ENCODE measurements at regions of chr17 and their contacts with region 1.

Region 1: DNA sequence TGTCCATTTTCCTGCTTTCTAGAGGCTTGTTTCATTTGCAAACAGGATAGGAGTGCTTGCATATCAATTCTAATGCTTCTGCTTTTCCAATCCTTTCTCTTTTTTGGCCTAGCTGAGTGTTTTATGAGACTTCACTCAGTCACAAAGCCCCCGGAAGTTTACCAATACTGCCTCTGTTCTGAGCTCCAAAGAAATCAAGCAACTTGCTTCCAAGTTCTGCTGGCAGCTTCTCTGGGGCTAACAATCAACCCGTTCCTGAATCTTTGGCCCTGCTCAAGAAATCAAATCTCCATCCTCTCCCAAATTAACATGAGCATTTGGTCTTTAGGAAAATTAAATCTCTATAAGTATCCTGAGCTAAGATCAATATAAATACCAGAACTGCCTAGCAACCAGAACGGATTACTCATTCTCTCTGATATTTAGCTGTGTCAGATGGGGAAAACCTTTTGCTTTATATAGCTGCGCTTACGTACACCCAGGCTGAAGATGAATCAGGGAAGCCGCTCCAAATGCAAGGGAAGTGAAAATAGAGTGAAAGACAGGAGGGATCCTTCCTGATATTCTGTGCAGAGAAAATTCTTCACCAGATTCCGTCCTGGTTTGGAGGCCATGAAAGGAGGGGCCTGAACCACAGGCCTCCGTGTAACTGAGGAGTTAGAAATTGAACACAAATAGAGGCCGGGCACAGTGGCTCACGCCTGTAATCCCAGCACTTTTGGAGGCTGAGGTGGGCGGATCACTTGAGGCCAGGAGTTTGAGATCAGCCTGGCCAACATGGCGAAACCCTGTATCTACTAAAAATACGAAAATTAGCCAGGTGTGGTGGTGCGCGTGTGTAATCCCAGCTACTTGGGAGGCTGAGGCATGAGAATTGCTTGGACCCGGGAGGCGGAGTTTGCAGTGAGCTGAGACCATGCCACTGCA is 23.3 kb upstream of the GRB2 start:
- DNase-seq: no peak
- ATAC-seq: no peak

Region 2: GRCh38 chr17:75142239-75142971 is 286.4 kb before region 1 on chr17:
- intact Hi-C with region 1: no loop called
- DNase-seq: no peak
- ATAC-seq: no peak

Region 3: GRCh38 chr17:75504347-75504964 is 75.7 kb after region 1 on chr17:
- intact Hi-C with region 1: loop called in 1 of 2 experiments (anchors 10 kb)
- DNase-seq: peak in 1 of 2 donors; percentile 57
- ATAC-seq: peak; percentile 65

Region 4: GRCh38 chr17:75515496-75516254 is 86.9 kb after region 1 on chr17 and contains the start of gene CASKIN2:
- intact Hi-C with region 1: loop called in 1 of 2 experiments (anchors 5 kb)
- DNase-seq: peak; percentile 96 to 98
- ATAC-seq: peak; percentile 80
- total RNA-seq, gene CASKIN2: 28.4 to 30.6 TPM

Region 5: DNA sequence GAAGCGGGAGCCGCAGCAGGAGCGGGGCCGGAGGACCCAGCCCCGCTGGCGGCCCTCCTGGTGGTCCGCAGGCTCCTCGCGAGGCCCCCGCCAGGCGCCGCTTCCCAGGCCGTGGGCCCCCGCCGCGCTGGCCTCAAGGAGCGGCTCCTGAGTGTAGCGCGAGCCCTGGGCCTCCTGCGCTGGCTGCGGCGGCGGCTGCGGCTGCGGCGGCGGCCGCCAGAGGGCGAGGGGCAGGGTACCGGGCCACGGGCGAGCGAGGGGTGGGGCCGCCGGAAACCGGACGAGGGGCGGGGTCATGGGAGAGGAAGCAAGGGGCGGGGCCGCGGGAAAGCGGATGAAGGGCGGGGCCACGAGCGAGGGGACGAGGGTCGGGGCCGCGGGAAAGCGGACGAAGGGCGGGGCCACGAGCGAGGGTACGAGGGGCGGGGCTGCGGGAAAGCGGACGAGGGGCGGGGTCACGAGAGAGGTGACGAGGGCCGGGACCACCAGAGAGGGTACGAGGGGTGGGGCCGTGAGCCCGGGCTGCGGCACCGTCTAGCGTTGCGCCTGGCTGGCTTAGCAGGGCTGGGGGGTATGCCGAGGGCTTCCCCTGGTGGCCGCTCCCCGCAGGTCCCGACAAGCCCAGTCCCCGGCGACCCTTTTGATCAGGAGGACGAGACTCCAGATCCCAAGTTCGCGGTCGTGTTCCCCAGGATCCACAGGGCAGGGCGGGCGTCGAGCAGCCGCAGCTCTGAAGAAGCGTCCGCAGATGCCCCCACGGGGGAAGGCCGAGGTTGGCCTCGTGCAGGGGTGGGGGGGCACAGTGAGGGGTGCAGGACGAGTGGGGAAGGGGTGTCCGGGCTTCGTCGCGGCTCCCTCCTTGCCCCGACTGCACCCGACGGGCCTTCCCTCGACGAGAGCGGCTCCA is 160.5 kb after region 1 on chr17:
- intact Hi-C with region 1: loop called in 1 of 2 experiments (anchors 5 kb)
- DNase-seq: peak; percentile 93 to 99
- ATAC-seq: peak; percentile 84

Region 6: DNA sequence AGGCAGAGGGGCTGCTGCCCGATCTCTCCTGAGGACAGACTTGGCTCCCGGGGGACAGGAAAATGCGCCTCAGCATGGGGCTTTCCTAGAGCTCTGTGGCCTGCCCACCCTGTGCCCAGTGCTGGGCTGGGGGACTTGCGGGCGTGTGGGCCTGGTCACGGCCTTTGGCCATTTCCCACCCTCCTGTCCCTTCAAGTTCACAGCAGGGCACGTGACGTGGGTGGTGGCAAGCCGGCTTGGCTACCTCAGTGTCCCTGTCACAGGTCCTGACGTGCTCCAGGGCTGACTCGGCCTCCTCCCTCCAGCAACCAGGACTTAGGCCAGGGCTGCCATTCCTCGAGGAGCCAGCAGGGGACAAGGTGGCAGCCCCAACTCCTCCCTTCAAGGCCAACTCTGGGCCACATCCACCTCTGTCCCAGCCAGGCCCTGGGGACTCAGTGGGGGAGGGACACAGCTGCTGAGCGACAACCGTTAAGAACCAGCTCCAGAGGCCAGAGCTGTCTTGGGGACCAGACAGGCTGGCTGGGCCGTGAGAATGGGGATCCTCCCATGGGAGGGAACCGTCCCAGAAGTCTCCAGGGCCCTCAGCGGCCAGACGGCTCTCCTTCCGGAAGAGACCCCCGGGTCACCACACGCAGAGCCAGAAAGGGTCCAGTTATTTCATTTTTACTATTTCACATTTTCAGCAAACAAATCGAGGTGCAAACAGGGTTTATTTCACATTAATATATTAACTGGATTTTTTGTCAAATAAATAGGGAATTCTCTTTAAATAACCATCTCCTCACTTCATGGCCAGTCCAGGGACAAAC is 416.4 kb after region 1 on chr17:
- intact Hi-C with region 1: no loop called
- DNase-seq: peak; percentile 89 to 92
- ATAC-seq: peak; percentile 75

Measured in left colon (tissue), 2 donors.